PC-9 (cell line): ENCODE measurements at regions of chr12 and their contacts with region 1.

Region 1: DNA sequence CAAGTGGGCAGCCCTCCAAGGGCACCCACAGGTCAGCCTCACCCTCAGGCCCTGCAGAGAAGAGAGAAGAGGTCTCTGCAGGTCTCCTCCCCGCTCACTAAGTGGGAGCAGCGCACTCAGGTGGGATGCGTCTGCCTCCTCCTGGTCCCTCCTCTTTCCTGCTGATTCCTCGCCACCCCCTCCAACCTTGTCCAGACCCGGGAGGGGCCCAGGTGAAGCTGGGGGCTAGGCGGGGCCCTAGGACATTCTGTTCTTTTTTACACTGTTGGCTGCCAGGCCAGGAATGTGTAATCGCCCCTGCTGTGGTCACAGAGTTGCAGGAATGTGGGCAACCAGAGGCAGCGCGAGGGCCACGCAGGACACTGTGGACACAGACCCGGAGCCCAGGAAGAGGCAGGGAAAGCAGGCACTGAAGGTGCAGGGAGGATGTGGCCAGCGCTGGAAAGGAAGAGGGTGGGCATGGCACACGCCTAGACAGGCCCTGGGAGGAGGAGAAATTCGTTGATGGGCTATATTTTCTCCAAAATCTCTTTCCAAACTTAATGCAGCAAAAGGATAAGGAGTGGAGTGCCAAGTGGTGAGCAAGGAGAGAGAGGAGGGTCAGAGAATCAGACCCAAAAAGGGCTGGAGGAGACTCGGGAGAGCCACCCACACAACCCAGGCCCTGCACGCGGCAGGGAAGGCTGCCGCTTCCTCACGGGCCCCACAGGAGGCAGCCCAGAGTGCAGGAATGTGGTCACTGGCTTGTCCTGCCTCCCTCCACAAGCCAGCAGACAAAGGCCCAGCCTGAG is 911 bp upstream of the SCNN1A start:
- DNase-seq: peak; percentile 87 to 97
- H3K4me3 ChIP-seq: peak overlapping the region; percentile 62
- H3K27ac ChIP-seq: peak overlapping the region; percentile 89
- H3K4me1 ChIP-seq: peaks cover 41% of the 10 kb centered on the region
- H3K27me3 ChIP-seq: no peaks in the 10 kb centered on the region
- CTCF ChIP-seq: peak; percentile 53; the same call in 1 of the 2 replicates

Region 2: GRCh38 chr12:6062757-6063735 is 313.2 kb before region 1 on chr12:
- CTCF ChIA-PET with region 1: interaction called, 3 read pairs
- POLR2A ChIA-PET with region 1: interaction called, 3 read pairs
- intact Hi-C with region 1: loop called (anchors 2 kb)
- DNase-seq: peak; percentile 48 to 80
- H3K4me3 ChIP-seq: no peak overlapping the region
- H3K27ac ChIP-seq: no peak overlapping the region
- H3K4me1 ChIP-seq: peaks cover 34% of the 10 kb centered on the region
- H3K27me3 ChIP-seq: no peaks in the 10 kb centered on the region
- CTCF ChIP-seq: peak; percentile 98

Region 3: GRCh38 chr12:6272300-6273204 is 103.7 kb before region 1 on chr12:
- CTCF ChIA-PET with region 1: no interaction called
- POLR2A ChIA-PET with region 1: no interaction called
- intact Hi-C with region 1: no loop called
- DNase-seq: peak; percentile 99
- H3K4me3 ChIP-seq: peak overlapping the region; percentile 23; the same call in 1 of the 2 replicates
- H3K27ac ChIP-seq: peak overlapping the region; percentile 98
- H3K4me1 ChIP-seq: peaks cover 64% of the 10 kb centered on the region
- H3K27me3 ChIP-seq: no peaks in the 10 kb centered on the region
- CTCF ChIP-seq: no peak

Region 4: GRCh38 chr12:6312529-6313325 is 63.5 kb before region 1 on chr12:
- CTCF ChIA-PET with region 1: interaction called, 5 read pairs
- POLR2A ChIA-PET with region 1: interaction called, 33 read pairs
- intact Hi-C with region 1: loop called (anchors 1 kb)
- DNase-seq: peak; percentile 96
- H3K4me3 ChIP-seq: peak overlapping the region; percentile 33; the same call in 1 of the 2 replicates
- H3K27ac ChIP-seq: peak overlapping the region; percentile 97
- H3K4me1 ChIP-seq: peaks cover 54% of the 10 kb centered on the region
- H3K27me3 ChIP-seq: no peaks in the 10 kb centered on the region
- CTCF ChIP-seq: no peak

Region 5: DNA sequence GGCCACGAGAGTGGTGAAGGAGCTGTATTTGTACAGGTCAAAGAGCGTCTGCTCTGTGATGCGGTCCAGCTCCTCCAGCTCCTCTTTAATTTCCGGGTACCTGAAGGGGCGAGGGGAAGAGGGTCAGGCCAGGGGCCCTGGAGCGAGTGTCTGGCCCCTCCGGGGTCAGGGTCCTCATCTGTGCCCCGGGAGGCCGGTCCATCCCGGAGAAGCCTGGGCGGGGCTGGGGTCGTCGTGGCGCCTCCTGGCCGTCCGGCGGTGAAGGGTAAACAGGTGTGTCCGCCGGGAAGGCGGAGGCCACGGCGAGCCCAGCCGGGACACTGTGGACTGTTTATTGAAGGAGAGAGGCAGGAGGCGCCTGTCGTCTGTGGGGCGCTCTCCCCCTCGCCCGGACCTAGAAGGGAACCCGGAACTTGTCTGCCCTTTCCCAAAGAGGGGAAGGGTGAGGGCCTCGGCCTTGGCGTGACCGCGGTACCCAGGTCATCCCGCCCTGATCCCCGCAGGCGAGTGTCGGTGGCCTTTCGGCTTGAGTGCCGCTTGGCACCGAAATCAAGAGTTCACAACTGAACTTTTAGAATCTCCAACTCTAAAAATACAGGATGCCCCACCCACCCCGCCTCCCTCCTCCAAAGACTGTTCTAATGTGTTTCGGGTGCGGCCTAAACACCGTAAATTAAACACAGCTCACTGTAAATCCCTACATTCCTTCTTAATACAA is 12.5 kb before region 1 on chr12:
- CTCF ChIA-PET with region 1: no interaction called
- POLR2A ChIA-PET with region 1: interaction called, 10 read pairs
- intact Hi-C with region 1: loop called (anchors 1 kb)
- DNase-seq: peak; percentile 70 to 82
- H3K4me3 ChIP-seq: peak overlapping the region; percentile 64
- H3K27ac ChIP-seq: peak overlapping the region; percentile 86
- H3K4me1 ChIP-seq: peaks cover 69% of the 10 kb centered on the region
- H3K27me3 ChIP-seq: no peaks in the 10 kb centered on the region
- CTCF ChIP-seq: no peak; the same call in 1 of the 2 replicates

Region 6: DNA sequence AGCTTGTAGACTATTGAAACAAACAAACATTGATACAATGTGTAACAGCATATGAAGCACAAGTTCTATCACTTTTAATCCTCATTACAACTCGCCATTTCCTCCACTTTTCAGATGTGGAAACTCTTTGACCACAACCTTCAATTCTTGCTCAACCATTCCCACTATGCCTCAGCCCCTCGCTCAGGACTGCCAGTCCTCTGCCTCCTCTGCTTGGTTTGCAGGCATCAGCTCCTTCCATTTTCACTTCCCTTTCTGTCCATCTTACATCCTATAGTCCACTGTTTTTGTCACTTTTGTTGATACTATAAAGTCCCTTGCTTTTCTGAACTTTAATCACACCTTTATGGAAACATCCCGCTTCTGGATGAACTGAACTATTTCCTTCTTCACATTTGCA is 40.3 kb after region 1 on chr12:
- CTCF ChIA-PET with region 1: no interaction called
- POLR2A ChIA-PET with region 1: no interaction called
- intact Hi-C with region 1: no loop called
- DNase-seq: no peak
- H3K4me3 ChIP-seq: no peak overlapping the region
- H3K27ac ChIP-seq: no peak overlapping the region
- H3K4me1 ChIP-seq: no peaks in the 10 kb centered on the region
- H3K27me3 ChIP-seq: no peaks in the 10 kb centered on the region
- CTCF ChIP-seq: no peak

Region 7: GRCh38 chr12:6430124-6430989 is 54.1 kb after region 1 on chr12:
- CTCF ChIA-PET with region 1: no interaction called
- POLR2A ChIA-PET with region 1: no interaction called
- intact Hi-C with region 1: loop called (anchors 1 kb)
- DNase-seq: peak; percentile 97 to 98
- H3K4me3 ChIP-seq: peak overlapping the region; percentile 37
- H3K27ac ChIP-seq: peak overlapping the region; percentile 98
- H3K4me1 ChIP-seq: peaks cover 29% of the 10 kb centered on the region
- H3K27me3 ChIP-seq: no peaks in the 10 kb centered on the region
- CTCF ChIP-seq: no peak

Region 8: DNA sequence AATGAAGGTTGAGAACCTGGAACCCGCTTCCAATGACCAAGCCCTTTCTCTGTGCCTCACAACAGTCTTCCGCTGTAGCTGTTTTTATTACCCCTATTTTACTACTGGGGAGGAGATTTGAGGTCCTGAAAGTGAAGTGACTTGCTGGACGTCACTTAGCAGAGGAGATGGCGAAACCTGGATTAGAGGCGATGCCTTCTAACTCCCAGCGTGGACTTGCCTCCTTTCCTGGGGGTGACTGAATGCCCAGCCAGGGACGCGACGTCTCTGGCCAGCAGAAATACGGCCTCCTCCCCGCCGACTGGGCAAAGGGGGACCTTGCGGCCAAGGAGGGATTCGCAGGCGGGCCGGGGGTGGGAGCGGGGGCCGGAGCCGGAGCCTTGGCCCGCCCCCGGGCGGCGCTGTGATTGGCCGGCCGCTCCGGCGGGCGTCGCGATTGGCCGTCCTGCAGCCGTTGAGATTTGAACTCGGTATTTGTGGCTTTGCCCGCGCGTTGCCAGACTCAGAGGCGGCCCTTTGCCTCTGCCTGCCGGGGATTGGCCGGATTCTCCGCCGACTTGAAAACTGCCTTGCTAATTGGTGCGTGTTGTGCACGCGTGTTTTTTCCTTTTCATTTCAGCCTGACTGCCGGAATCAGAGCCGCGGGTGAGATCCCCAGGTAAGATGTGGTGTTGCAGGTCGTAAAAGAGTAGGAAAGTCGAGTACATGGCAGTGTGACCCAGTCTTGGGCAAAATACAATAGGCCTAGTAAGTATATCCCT is 117.4 kb after region 1 on chr12 and contains the start of gene NCAPD2:
- CTCF ChIA-PET with region 1: no interaction called
- POLR2A ChIA-PET with region 1: interaction called, 5 read pairs
- intact Hi-C with region 1: loop called (anchors 5 kb)
- DNase-seq: peak; percentile 93 to 98
- H3K4me3 ChIP-seq: peak within 1 kb of the TSS; percentile 87
- H3K27ac ChIP-seq: peak within 1 kb of the TSS; percentile 85
- H3K4me1 ChIP-seq: peaks cover 24% of the 10 kb centered on the region
- H3K27me3 ChIP-seq: no peaks in the 10 kb centered on the region
- CTCF ChIP-seq: peak; percentile 46; the same call in 1 of the 2 replicates
- total RNA-seq, gene NCAPD2: 220 and 266 TPM in 2 replicates